Activated naive CD4-positive, alpha-beta T cell treated with anti-CD3 and anti-CD28 coated beads for 36 hours (primary cell): ENCODE measurements at regions of chr3 and their contacts with region 1.

Region 1: DNA sequence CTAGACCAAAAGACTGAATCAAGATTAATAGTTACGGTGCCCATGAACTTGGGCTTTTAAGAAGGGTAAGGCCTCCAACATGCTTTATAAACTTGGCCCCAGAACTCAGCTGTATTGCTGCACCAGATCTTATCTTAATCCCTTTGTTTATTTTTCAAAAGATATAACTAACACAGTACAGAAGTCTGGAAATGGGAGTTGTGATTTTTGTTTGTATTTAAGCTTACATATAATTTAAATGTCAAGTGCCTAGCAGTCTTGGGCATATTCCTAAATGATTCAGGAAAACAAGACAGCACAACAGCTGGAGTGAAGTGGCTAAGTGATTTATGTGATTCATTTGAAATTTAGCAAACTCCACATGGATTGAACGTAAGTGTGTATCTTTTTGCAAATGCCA is 56.2 kb downstream of the NBEAL2 start:
- DNase-seq: no peak
- H3K4me3 Mint-ChIP-seq: no peak overlapping the region
- H3K27ac Mint-ChIP-seq: no peak overlapping the region
- H3K4me1 Mint-ChIP-seq: peaks cover 40% of the 10 kb centered on the region
- H3K27me3 Mint-ChIP-seq: no peaks in the 10 kb centered on the region

Region 2: GRCh38 chr3:47057212-47057671 is 21.6 kb after region 1 on chr3:
- CTCF ChIA-PET with region 1: interaction called, 3 read pairs
- intact Hi-C with region 1: loop called (anchors 1 kb)
- DNase-seq: peak; percentile 72
- H3K4me3 Mint-ChIP-seq: no peak overlapping the region
- H3K27ac Mint-ChIP-seq: no peak overlapping the region
- H3K4me1 Mint-ChIP-seq: peaks cover 45% of the 10 kb centered on the region
- H3K27me3 Mint-ChIP-seq: no peaks in the 10 kb centered on the region